ENCODE measurements at regions of chrX and their contacts with region 1.

Region 1: DNA sequence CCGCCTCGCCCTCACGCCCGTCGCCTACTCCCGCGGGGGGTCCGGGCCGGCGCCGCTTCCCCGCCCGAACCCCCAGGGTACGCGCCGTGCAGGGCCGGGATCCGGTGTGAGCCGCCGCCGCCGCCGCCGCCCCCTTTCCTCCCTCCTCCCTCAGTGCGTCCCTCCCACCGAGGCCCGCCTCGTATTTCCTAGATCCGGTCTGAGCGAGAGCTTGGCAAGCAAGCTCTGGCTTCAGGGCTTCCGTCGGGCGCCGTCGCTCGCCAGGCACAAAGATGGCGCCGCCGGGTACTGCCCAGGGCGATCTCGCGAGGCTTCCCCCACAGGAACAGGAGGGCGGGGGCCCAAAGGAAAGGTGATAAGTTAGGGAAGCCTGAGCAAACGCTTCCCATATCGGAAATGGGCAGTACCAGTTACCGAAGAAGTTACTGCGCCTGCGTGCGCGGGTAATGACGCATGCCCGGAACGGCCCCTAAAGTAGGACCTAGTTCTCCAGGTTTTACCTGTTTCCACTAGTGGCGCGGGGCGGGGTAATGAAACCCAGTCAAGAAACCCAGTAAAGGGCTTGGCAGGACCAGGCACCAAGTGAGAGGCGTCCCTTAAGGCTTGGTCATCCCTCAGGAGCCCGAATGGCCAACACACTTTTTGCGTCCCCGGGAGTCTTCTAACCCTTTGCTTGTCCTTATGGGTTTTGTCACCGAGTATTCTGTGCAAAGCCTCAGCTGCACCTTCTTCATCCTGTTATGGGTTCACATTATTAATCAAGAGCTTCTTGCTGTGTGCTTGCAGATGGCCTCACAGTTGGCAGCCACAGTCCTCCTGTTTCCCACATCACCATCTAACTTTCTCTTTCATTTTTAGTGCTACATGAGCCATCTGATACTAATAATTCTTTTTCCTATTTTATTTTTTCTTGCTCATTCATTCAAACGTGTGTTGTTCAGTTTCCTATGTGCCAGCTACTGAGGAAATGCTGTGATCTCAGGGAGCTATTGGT is at the start of gene TAB3:
- DNase-seq: peak; percentile 87 to 97
- H3K4me3 ChIP-seq: peak within 1 kb of the TSS; percentile 74 to 93
- H3K27ac ChIP-seq: peak within 1 kb of the TSS; percentile 76 to 83
- H3K4me1 ChIP-seq: no peaks in the 10 kb centered on the region
- H3K27me3 ChIP-seq: no peaks in the 10 kb centered on the region
- CTCF ChIP-seq: no peak
- total RNA-seq, gene TAB3: 23.2 TPM

Region 2: DNA sequence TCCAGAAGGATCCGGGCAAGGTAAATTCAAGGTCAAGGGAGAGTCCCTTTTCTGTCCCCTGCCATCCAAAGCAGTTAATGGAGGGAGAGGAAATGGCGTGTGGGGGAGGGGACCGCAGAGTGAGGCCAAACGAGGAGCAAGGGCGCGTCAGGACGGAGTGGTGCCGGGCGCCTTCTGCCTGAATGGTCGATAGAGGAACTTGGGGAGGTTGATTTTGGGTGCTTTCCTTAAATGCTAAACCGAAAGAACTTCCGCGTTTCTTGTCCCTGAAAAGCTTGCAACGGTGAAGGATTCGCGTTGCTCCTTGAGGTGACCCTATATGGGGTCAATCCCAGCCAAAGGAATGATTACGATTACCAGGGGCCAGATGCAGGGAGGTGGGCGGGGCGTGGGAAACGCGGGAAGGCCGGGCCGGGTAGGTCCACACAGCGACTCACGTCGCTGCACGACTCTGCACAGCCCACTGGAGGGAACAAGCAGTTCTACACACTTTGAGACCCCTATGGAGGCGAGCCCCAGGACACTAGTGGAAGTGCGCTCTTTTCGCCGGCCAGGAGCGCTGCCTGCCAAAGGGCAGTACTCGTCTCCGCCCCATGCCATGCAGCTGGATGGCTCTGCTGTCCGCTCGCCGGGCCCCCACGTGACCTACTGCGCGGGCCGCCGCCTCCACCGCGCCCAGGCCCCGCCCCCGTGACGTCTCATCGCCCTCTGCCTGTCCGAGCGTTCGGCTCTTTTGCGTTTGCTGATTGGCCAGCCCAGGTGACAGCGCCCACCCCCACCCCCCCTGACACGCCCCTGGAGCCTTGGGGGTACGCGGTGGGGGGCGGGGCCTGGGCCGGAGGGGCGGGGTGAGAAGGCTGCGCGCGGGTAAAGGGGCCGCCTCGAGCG is 236.7 kb before region 1 on chrX:
- intact Hi-C with region 1: loop called (anchors 10 kb)
- DNase-seq: peak; percentile 83 to 96
- H3K4me3 ChIP-seq: peak overlapping the region; percentile 59 to 75
- H3K27ac ChIP-seq: peak overlapping the region; percentile 15 to 48
- H3K4me1 ChIP-seq: no peaks in the 10 kb centered on the region
- H3K27me3 ChIP-seq: no peaks in the 10 kb centered on the region
- CTCF ChIP-seq: no peak